GM12878 (cell line): ENCODE measurements at regions of chr4 and their contacts with region 1.

Region 1: DNA sequence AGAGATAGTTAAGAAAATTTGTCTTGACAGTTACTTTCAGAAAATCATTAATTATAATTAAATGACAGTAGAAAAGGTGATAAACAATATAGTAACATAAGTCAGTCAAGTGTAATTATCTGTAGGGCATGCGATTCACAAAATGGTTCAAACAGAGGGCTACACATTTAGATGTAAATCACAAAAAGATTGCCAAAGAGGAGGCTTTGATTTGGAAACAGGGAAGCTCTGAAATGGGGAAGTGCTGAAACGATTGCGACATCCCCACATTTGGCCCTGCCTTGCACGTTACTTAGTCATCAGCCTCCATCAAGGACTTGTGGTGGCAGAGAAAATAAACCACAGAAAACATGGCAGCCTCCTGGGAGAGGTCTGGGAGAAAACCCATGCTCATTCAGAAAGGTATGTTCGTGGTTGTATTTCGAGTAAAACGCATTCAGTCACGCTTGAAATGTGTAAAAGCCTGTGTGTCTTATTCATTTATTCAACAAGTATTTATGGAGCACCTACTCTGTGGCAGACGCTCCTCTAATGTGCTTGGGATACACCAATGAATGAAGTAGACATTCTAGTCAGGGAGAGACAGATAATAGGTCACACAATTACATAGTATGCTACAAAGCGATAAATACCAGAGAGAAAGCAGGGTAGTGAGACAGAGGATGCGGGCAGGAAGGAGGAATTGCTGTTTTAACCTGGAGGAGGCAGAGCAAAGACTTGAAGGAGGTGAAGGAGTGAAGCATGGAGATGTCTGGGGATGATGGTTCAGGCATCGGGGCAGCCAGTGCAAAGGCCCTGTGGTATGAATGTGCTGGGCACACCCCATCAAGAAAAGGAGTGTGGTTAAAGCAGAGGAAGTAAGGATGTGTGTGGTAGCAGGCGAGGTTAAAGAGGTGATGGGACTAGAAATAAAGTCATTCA is 7.8 kb downstream of the RBM47 start:
- DNase-seq: peak; percentile 93
- ATAC-seq: peak; percentile 66
- H3K4me3 ChIP-seq: peak overlapping the region; percentile 58
- H3K27ac ChIP-seq: peak overlapping the region; percentile 93
- H3K4me1 ChIP-seq: peaks cover 38% of the 10 kb centered on the region
- H3K27me3 ChIP-seq: no peaks in the 10 kb centered on the region
- CTCF ChIP-seq: no peak
- EP300 ChIP-seq: peak; percentile 74 to 81
- POLR2A ChIP-seq: no peak; the same call in 1 of the 2 replicates
- RAD21 ChIP-seq: 0 out of 2 replicates have a peak, but pooled peaks have one; percentile 13

Region 2: GRCh38 chr4:40515398-40516293 is 106.2 kb before region 1 on chr4:
- CTCF ChIA-PET with region 1: no interaction called
- POLR2A ChIA-PET with region 1: interaction called, 3 read pairs
- RAD21 ChIA-PET with region 1: interaction called, 16 read pairs
- SMC1A ChIA-PET with region 1: interaction called, 10 read pairs
- in situ Hi-C with region 1: no loop called
- intact Hi-C with region 1: no loop called
- DNase-seq: peak; percentile 95
- ATAC-seq: peak; percentile 87
- H3K4me3 ChIP-seq: peak overlapping the region; percentile 47; the same call in 1 of the 2 replicates
- H3K27ac ChIP-seq: peak overlapping the region; percentile 88
- H3K4me1 ChIP-seq: peaks cover 35% of the 10 kb centered on the region
- H3K27me3 ChIP-seq: no peaks in the 10 kb centered on the region
- CTCF ChIP-seq: no peak
- EP300 ChIP-seq: peak in 1 of 2 experiments; percentile 55; a peak in 1 of 4 replicates
- POLR2A ChIP-seq: no peak
- RAD21 ChIP-seq: no peak

Region 3: GRCh38 chr4:40550948-40551462 is 70.8 kb before region 1 on chr4:
- CTCF ChIA-PET with region 1: interaction called, 7 read pairs
- POLR2A ChIA-PET with region 1: no interaction called
- RAD21 ChIA-PET with region 1: interaction called, 6 read pairs
- SMC1A ChIA-PET with region 1: interaction called, 6 read pairs
- in situ Hi-C with region 1: no loop called
- intact Hi-C with region 1: loop called (anchors 2 kb)
- DNase-seq: peak; percentile 76
- ATAC-seq: peak; percentile 89
- H3K4me3 ChIP-seq: peak overlapping the region; percentile 20
- H3K27ac ChIP-seq: peak overlapping the region; percentile 47
- H3K4me1 ChIP-seq: peaks cover 18% of the 10 kb centered on the region; the same call in 1 of the 2 replicates
- H3K27me3 ChIP-seq: no peaks in the 10 kb centered on the region
- CTCF ChIP-seq: peak; percentile 42 to 53 (median 47); a peak in 5 of 6 replicates
- EP300 ChIP-seq: peak in 1 of 2 experiments; percentile 6; a peak in 1 of 4 replicates
- POLR2A ChIP-seq: no peak
- RAD21 ChIP-seq: peak; percentile 71

Region 4: DNA sequence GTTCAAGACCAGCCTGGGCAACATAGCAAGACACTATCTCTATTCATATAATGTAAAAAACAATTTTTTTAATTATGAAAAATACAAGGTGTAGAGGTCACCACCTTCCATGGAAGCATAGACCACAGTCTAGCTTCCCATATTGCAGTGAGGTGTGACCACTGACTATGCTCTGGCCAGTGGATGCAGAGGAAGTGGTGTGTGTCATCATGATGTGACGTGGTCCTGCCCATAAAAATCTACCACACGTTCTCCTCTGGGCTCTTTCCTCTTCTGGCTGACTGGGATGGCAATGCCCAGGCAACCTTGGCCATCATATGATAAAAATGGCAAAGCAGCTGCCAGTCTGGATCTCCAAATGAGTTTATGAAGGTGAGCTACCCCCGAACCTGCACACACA is 57.8 kb before region 1 on chr4:
- CTCF ChIA-PET with region 1: interaction called, 6 read pairs
- POLR2A ChIA-PET with region 1: interaction called, 3 read pairs
- RAD21 ChIA-PET with region 1: interaction called, 6 read pairs
- SMC1A ChIA-PET with region 1: interaction called, 30 read pairs
- in situ Hi-C with region 1: no loop called
- intact Hi-C with region 1: loop called (anchors 5 kb)
- DNase-seq: no peak
- ATAC-seq: peak; percentile 14
- H3K4me3 ChIP-seq: no peak overlapping the region
- H3K27ac ChIP-seq: peak overlapping the region; percentile 50
- H3K4me1 ChIP-seq: peaks cover 68% of the 10 kb centered on the region
- H3K27me3 ChIP-seq: no peaks in the 10 kb centered on the region
- CTCF ChIP-seq: no peak
- EP300 ChIP-seq: no peak
- POLR2A ChIP-seq: 0 out of 2 replicates have a peak, but pooled peaks have one; percentile 23
- RAD21 ChIP-seq: no peak

Region 5: DNA sequence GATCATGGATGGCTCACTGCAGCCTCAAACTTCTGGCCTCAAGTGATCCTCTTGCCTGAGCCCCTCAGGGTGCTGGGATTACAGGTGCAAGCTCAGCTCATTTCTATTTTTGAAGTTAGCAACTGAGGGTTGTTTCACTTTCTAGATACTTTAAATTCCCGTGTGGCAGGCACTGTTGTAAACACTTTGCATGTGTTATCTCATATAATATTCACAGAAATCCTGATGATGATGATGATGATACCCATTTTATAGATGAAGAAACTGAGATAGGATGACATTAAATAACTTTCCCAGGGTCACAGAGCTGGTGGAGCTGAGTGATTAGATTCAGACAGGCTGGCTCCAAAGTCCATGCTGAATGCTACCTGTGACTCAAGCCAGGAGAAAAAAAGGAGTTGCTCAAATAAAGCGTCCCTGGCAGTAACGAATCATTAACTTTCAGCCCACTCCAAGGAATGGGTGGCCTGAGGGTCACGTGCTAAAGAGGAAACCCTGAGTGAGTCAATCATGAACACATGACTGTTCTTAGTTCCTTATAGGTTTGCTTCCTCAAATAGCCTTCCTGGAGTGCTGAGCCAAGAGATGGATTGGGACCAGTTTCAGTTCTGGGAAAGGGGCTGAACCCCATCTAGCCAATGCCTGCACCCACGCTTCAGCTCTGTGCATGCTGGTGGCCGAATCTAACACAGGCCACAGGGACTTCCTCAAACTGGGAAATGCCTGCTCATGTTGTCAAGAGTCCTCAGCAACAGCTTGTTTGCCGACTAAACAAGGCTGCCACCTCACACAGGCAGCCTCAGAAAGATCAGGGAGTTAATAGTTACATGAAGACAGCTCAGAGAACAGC is 45.0 kb before region 1 on chr4:
- CTCF ChIA-PET with region 1: interaction called, 5 read pairs
- POLR2A ChIA-PET with region 1: interaction called, 24 read pairs
- RAD21 ChIA-PET with region 1: interaction called, 29 read pairs
- SMC1A ChIA-PET with region 1: interaction called, 48 read pairs
- in situ Hi-C with region 1: no loop called
- intact Hi-C with region 1: loop called (anchors 1 kb)
- DNase-seq: peak; percentile 82
- ATAC-seq: peak; percentile 80
- H3K4me3 ChIP-seq: peak overlapping the region; percentile 35
- H3K27ac ChIP-seq: peak overlapping the region; percentile 89
- H3K4me1 ChIP-seq: peaks cover 57% of the 10 kb centered on the region
- H3K27me3 ChIP-seq: no peaks in the 10 kb centered on the region
- CTCF ChIP-seq: no peak
- EP300 ChIP-seq: peak in 1 of 2 experiments; percentile 63; a peak in 2 of 4 replicates
- POLR2A ChIP-seq: no peak
- RAD21 ChIP-seq: no peak

Region 6: GRCh38 chr4:40648742-40649281 is 27.0 kb after region 1 on chr4:
- CTCF ChIA-PET with region 1: no interaction called
- POLR2A ChIA-PET with region 1: no interaction called
- RAD21 ChIA-PET with region 1: interaction called, 4 read pairs
- SMC1A ChIA-PET with region 1: interaction called, 37 read pairs
- in situ Hi-C with region 1: no loop called
- intact Hi-C with region 1: no loop called
- DNase-seq: no peak
- ATAC-seq: peak; percentile 84
- H3K4me3 ChIP-seq: no peak overlapping the region
- H3K27ac ChIP-seq: 0 out of 2 replicates have a peak overlapping the region, but pooled peaks have one; percentile 2
- H3K4me1 ChIP-seq: peaks cover 17% of the 10 kb centered on the region
- H3K27me3 ChIP-seq: no peaks in the 10 kb centered on the region
- CTCF ChIP-seq: no peak
- EP300 ChIP-seq: no peak
- POLR2A ChIP-seq: no peak
- RAD21 ChIP-seq: no peak

Region 7: GRCh38 chr4:40656201-40656901 is 34.5 kb after region 1 on chr4:
- CTCF ChIA-PET with region 1: no interaction called
- POLR2A ChIA-PET with region 1: interaction called, 12 read pairs
- RAD21 ChIA-PET with region 1: interaction called, 24 read pairs
- SMC1A ChIA-PET with region 1: interaction called, 37 read pairs
- in situ Hi-C with region 1: no loop called
- intact Hi-C with region 1: loop called (anchors 1 kb)
- DNase-seq: peak; percentile 91
- ATAC-seq: peak; percentile 95
- H3K4me3 ChIP-seq: peak overlapping the region; percentile 35; the same call in 1 of the 2 replicates
- H3K27ac ChIP-seq: peak overlapping the region; percentile 97
- H3K4me1 ChIP-seq: peaks cover 35% of the 10 kb centered on the region
- H3K27me3 ChIP-seq: no peaks in the 10 kb centered on the region
- CTCF ChIP-seq: no peak
- EP300 ChIP-seq: peak in 1 of 2 experiments; percentile 79; a peak in 2 of 4 replicates
- POLR2A ChIP-seq: no peak
- RAD21 ChIP-seq: no peak